Activated naive CD4-positive, alpha-beta T cell treated with anti-CD3 and anti-CD28 coated beads for 36 hours (primary cell): ENCODE measurements at regions of chr13 and their contacts with region 1.

Region 1: GRCh38 chr13:42354241-42355091 is 82.5 kb downstream of the AKAP11 start:
- DNase-seq: peak; percentile 67
- H3K4me3 Mint-ChIP-seq: peak overlapping the region; percentile 70
- H3K27ac Mint-ChIP-seq: peak overlapping the region; percentile 99
- H3K4me1 Mint-ChIP-seq: peaks cover 68% of the 10 kb centered on the region
- H3K27me3 Mint-ChIP-seq: no peaks in the 10 kb centered on the region

Region 2: DNA sequence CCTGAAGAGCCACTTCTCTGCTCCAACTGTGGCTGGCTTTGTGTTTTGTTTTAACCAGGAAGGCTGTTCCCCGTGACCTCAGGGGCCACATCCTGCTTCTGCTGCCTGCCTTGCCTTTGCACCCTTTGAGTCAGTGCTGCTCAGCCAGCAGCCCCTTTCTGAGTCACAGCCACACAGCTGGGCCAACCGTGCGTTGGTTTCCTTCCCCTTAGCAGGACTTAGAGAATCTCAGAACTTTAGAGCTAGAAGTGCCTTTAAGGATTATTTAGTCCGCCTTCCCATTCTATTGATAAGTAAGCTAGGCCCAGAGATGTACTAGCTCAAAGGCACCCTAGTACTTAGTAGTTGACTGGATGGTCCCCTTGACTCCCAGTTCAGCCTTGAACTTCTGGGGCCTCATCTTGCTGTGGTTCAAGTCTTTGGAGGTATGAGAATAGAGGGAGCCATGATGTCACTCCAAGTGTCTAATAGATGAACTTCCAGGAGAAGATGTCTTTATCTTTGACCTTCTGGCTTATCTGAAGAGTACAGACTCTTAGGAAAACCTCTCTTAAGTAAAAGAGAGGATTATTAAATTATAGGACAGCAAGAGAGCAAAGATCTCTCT is 889.1 kb before region 1 on chr13:
- CTCF ChIA-PET with region 1: no interaction called
- intact Hi-C with region 1: loop called (anchors 1 kb)
- DNase-seq: peak; percentile 97
- H3K4me3 Mint-ChIP-seq: peak overlapping the region; percentile 76
- H3K27ac Mint-ChIP-seq: peak overlapping the region; percentile 93
- H3K4me1 Mint-ChIP-seq: peaks cover 89% of the 10 kb centered on the region
- H3K27me3 Mint-ChIP-seq: no peaks in the 10 kb centered on the region

Region 3: GRCh38 chr13:42369071-42369797 is 14.8 kb after region 1 on chr13:
- CTCF ChIA-PET with region 1: interaction called, 5 read pairs
- intact Hi-C with region 1: loop called (anchors 1 kb)
- DNase-seq: peak; percentile 71
- H3K4me3 Mint-ChIP-seq: no peak overlapping the region
- H3K27ac Mint-ChIP-seq: peak overlapping the region; percentile 32
- H3K4me1 Mint-ChIP-seq: peaks cover 39% of the 10 kb centered on the region
- H3K27me3 Mint-ChIP-seq: no peaks in the 10 kb centered on the region

Region 4: GRCh38 chr13:42392716-42393572 is 38.5 kb after region 1 on chr13:
- CTCF ChIA-PET with region 1: interaction called, 5 read pairs
- intact Hi-C with region 1: loop called (anchors 1 kb)
- DNase-seq: peak; percentile 58
- H3K4me3 Mint-ChIP-seq: peak overlapping the region; percentile 84
- H3K27ac Mint-ChIP-seq: peak overlapping the region; percentile 100
- H3K4me1 Mint-ChIP-seq: peaks cover 74% of the 10 kb centered on the region
- H3K27me3 Mint-ChIP-seq: no peaks in the 10 kb centered on the region

Region 5: GRCh38 chr13:42478531-42479156 is 124.2 kb after region 1 on chr13:
- CTCF ChIA-PET with region 1: interaction called, 5 read pairs
- intact Hi-C with region 1: loop called (anchors 1 kb)
- DNase-seq: no peak
- H3K4me3 Mint-ChIP-seq: no peak overlapping the region
- H3K27ac Mint-ChIP-seq: no peak overlapping the region
- H3K4me1 Mint-ChIP-seq: peaks cover 17% of the 10 kb centered on the region
- H3K27me3 Mint-ChIP-seq: no peaks in the 10 kb centered on the region

Region 6: GRCh38 chr13:42574435-42575311 is 220.2 kb after region 1 on chr13:
- CTCF ChIA-PET with region 1: no interaction called
- intact Hi-C with region 1: loop called (anchors 5 kb)
- DNase-seq: peak; percentile 62
- H3K4me3 Mint-ChIP-seq: peak overlapping the region; percentile 76
- H3K27ac Mint-ChIP-seq: peak overlapping the region; percentile 8
- H3K4me1 Mint-ChIP-seq: peaks cover 27% of the 10 kb centered on the region
- H3K27me3 Mint-ChIP-seq: peaks cover 27% of the 10 kb centered on the region

Region 7: DNA sequence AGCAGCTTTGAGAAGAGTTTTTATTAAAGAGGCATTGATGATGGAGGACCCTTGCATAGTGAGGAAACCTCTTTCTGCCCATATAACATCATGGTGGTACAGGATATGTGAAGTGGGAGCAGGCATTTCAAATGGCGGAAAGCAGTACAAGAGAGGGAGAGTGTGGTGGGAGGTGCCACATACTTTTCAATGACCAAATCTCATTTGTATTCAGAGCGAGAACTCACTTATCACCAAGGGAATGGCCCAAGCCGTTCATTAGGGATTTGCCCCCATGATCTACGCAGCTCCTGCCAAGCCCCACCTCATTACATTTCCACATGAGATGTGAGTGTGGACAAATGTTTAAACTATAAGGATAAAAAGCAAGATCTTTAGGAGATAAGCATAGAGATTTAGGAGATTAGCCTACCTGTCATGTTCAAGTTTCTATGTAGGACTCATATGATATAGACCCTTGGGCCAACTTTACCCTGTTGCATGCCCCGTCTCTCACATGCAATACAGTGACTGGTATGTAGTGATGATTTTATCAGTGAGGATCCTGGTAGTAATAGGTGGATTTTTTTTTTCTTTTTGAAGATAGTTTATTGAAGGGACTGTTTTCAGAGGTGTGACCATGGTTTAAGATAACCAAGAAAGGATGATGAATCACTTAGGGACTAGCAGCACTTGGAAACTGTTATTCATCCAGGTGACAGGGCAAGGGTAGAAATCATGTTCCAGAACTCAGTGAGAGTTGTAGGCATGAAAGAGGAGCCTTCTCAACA is 707.2 kb after region 1 on chr13:
- CTCF ChIA-PET with region 1: no interaction called
- intact Hi-C with region 1: loop called (anchors 5 kb)
- DNase-seq: peak; percentile 57
- H3K4me3 Mint-ChIP-seq: no peak overlapping the region
- H3K27ac Mint-ChIP-seq: peak overlapping the region; percentile 67
- H3K4me1 Mint-ChIP-seq: peaks cover 59% of the 10 kb centered on the region
- H3K27me3 Mint-ChIP-seq: no peaks in the 10 kb centered on the region